Heart left ventricle (tissue), 16 donors: ENCODE measurements at regions of chr1 and their contacts with region 1.

Region 1: GRCh38 chr1:11707621-11708276 is 16.2 kb downstream of the DRAXIN start:
- DNase-seq: peak in 4 of 5 donors; percentile 75 to 89 (median 83)
- ATAC-seq: peak; percentile 80 to 94 (median 88)
- H3K4me3 ChIP-seq: no peak overlapping the region
- H3K27ac ChIP-seq: peak overlapping the region in 6 of 12 donors; percentile 3 to 71 (median 51)
- H3K4me1 ChIP-seq: peaks cover 0 to 13% (median 9%) of the 10 kb centered on the region in 12 donors
- H3K27me3 ChIP-seq: peaks cover 0 to 23% (median 0%) of the 10 kb centered on the region in 9 donors
- CTCF ChIP-seq: no peak
- POLR2A ChIP-seq: no peak

Region 2: DNA sequence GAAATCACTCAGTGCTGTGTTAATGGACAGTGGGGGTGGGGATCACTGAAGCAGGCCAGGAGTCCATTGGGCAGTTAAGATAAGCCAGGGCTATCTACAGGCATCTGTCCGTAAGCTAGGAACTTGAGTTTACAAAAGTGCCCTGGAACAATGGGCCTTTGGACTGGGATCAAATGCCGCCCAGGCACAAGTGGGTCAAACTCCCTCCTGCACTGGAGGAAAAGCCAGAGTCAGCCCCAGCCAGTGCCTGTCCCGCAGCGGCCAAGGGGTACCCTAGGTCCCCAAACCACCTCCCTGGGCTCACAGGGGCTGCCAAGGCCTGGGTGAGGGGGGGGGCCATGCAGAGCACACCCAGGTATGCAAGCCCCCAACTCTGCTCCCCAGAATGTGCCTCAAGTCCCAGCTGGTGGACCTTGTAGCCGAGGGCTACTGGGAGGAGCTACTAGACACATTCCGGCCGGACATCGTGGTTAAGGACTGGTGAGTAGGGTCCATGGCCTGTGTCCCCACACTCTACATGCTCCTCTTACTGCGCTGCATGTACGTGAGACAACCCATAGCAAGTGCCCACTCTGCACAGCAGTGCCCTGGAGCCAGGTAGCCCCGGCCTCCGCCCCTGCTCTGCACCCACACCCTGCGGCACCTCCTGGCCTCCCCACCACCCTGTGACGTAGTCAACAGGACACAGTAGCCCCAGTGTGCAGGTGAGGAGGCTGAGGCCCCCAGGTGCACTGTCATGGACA is 36.0 kb before region 1 on chr1:
- intact Hi-C with region 1: loop called in 1 of 10 experiments (anchors 5 kb)
- DNase-seq: no peak
- ATAC-seq: peak in 1 of 4 donors; percentile 8
- H3K4me3 ChIP-seq: no peak overlapping the region
- H3K27ac ChIP-seq: no peak overlapping the region
- H3K4me1 ChIP-seq: peaks cover 0 to 22% (median 0%) of the 10 kb centered on the region in 12 donors
- H3K27me3 ChIP-seq: no peaks in the 10 kb centered on the region
- CTCF ChIP-seq: no peak
- POLR2A ChIP-seq: no peak